ENCODE measurements at regions of chr5 and their contacts with region 1.

Region 1: GRCh38 chr5:14917719-14918118 is 46.1 kb upstream of the ANKH start:
- DNase-seq: no peak
- H3K4me3 ChIP-seq: no peak overlapping the region
- H3K27ac ChIP-seq: no peak overlapping the region
- H3K4me1 ChIP-seq: no peaks in the 10 kb centered on the region
- H3K27me3 ChIP-seq: no peaks in the 10 kb centered on the region
- CTCF ChIP-seq: no peak

Region 2: DNA sequence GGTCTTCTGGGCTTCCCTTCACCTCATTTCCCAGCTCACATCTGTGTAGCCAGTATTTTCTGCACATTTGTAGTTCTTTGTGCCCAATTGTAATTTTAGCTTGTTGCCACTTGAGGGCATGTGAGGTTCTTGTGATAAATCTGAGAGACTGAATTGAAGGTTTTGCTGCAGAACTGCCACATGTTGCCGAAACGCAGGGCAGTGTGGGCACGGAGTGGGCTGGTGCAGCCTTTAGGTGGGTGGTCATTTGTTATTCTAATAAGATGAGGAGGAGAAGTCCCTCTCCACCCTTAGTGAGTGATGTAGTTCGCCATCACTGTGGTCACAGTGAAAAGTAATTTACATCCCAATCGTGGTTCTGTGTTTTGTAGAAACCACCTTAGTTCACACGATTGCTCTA is 232.0 kb before region 1 on chr5:
- CTCF ChIA-PET with region 1: no interaction called
- POLR2A ChIA-PET with region 1: no interaction called
- intact Hi-C with region 1: no loop called
- DNase-seq: peak; percentile 69
- H3K4me3 ChIP-seq: no peak overlapping the region
- H3K27ac ChIP-seq: no peak overlapping the region
- H3K4me1 ChIP-seq: no peaks in the 10 kb centered on the region
- H3K27me3 ChIP-seq: no peaks in the 10 kb centered on the region
- CTCF ChIP-seq: peak; percentile 69

Region 3: DNA sequence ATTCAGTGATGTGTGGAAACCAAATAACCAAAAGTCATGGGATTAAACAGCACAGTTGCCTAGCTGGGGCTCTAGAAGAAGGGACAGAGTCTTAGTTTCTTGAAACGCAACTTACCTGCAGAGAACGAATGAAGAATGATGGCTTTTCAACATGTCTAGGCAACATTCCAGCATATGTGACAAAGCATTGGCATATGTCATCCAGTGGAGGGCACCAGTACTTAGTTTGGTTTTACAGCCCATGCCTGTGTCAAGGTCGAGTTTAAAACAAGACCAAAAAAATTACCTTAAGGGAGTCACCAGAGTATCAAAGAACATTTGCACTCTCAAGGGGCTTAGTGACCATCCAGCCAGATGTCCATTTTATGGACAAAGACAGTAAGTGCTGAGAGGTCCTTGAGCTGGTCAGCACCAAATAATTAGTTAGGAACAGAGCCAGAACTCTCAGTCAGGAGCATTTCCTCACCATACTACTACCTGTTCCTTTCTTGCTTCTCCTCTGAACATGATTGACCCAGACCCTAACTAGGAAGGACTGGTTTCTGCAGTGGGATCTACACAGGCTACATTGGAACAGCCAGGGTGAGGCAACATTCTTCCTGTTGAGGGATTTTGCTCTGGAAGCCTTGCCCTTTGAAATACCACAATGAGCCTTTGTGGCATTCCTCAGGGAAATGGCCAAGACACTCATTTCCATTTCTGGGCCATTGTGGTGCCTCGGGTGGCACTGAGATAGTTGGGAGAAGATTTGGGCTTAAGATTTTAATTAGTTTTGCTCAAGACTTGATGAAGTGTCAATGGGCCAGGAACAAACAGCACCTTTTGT is 29.3 kb after region 1 on chr5:
- CTCF ChIA-PET with region 1: no interaction called
- POLR2A ChIA-PET with region 1: no interaction called
- intact Hi-C with region 1: loop called (anchors 1 kb)
- DNase-seq: peak; percentile 45
- H3K4me3 ChIP-seq: no peak overlapping the region
- H3K27ac ChIP-seq: no peak overlapping the region
- H3K4me1 ChIP-seq: no peaks in the 10 kb centered on the region
- H3K27me3 ChIP-seq: no peaks in the 10 kb centered on the region
- CTCF ChIP-seq: peak; percentile 50

Measured in A673 (cell line).